Caco-2 (cell line): ENCODE measurements at regions of chr1 and their contacts with region 1.

Region 1: GRCh38 chr1:226547754-226548191 is 791 bp upstream of the STUM start:
- DNase-seq: peak; percentile 84 to 85
- H3K4me3 ChIP-seq: peak overlapping the region; percentile 40; the same call in 1 of the 2 replicates
- H3K4me3 Mint-ChIP-seq: peak overlapping the region; percentile 63
- H3K27ac Mint-ChIP-seq: no peak overlapping the region
- H3K4me1 ChIP-seq: peaks cover 6% of the 10 kb centered on the region
- H3K4me1 Mint-ChIP-seq: peaks cover 11% of the 10 kb centered on the region
- H3K27me3 ChIP-seq: peaks cover 1% of the 10 kb centered on the region; the same call in 1 of the 2 replicates
- H3K27me3 Mint-ChIP-seq: peaks cover 7% of the 10 kb centered on the region
- CTCF ChIP-seq: peak; percentile 59 to 86

Region 2: DNA sequence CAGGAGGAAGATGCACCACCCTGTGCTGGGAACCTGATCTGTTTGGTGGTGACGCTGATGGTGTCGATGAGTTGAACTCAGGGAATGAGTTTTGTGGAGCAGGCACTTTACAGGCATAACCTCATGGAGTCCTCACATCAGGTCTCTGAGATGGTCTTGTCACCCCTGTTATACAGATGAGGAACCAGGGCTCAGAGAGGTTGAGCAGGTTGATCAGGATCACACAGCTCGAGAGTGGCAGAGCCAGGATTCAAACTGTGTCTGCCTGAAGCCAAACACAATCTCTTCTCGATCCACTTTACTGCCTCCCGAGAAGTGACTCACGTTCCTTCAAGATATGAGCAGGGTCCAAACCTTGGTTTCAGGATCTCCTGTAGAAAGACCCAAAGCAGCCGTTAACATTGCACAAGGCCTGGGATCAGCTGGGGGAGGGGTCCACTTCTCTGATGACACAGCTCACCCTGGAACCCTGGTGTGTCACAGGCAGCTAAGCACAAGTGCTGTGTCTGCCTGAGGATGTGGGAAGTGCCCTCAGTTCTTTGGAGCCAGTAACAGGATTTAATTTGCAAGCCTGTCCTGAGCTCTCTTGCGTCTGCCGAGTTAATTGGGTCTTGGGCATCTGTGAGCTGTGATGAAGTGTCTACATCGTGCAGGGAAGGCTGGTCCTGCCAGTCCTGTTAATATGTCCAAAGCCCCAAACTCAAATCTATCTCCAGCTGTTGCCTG is 64.6 kb before region 1 on chr1:
- CTCF ChIA-PET with region 1: interaction called, 4 read pairs
- POLR2A ChIA-PET with region 1: no interaction called
- intact Hi-C with region 1: loop called (anchors 1 kb)
- DNase-seq: no peak
- H3K4me3 ChIP-seq: no peak overlapping the region
- H3K4me3 Mint-ChIP-seq: no peak overlapping the region
- H3K27ac Mint-ChIP-seq: no peak overlapping the region
- H3K4me1 ChIP-seq: peaks cover 31% of the 10 kb centered on the region
- H3K4me1 Mint-ChIP-seq: no peaks in the 10 kb centered on the region
- H3K27me3 ChIP-seq: no peaks in the 10 kb centered on the region
- H3K27me3 Mint-ChIP-seq: no peaks in the 10 kb centered on the region
- CTCF ChIP-seq: no peak

Region 3: DNA sequence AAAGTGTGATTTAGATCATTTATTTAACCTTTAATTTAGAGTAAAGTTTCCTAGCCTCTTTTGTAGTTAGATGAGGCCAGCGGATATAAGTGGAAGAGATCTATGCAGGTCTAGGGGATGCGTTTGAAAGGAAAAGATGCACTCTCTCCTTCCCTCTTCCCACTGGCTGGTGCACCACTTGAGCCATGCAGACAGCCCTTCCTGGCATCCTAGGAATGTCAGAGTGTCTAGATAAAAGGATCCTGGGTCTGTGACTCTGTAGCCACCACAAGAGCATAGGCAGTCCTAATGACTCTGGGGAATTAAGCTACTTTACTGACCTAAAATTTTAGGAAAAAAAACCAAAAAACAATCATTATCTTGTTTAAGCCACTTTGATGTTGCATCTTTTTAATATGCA is 15.2 kb before region 1 on chr1:
- CTCF ChIA-PET with region 1: interaction called, 9 read pairs
- POLR2A ChIA-PET with region 1: no interaction called
- intact Hi-C with region 1: loop called (anchors 2 kb)
- DNase-seq: peak in 1 of 2 experiments; percentile 37
- H3K4me3 ChIP-seq: no peak overlapping the region
- H3K4me3 Mint-ChIP-seq: no peak overlapping the region
- H3K27ac Mint-ChIP-seq: no peak overlapping the region
- H3K4me1 ChIP-seq: peaks cover 24% of the 10 kb centered on the region
- H3K4me1 Mint-ChIP-seq: peaks cover 22% of the 10 kb centered on the region
- H3K27me3 ChIP-seq: no peaks in the 10 kb centered on the region
- H3K27me3 Mint-ChIP-seq: peaks cover 3% of the 10 kb centered on the region
- CTCF ChIP-seq: no peak

Region 4: DNA sequence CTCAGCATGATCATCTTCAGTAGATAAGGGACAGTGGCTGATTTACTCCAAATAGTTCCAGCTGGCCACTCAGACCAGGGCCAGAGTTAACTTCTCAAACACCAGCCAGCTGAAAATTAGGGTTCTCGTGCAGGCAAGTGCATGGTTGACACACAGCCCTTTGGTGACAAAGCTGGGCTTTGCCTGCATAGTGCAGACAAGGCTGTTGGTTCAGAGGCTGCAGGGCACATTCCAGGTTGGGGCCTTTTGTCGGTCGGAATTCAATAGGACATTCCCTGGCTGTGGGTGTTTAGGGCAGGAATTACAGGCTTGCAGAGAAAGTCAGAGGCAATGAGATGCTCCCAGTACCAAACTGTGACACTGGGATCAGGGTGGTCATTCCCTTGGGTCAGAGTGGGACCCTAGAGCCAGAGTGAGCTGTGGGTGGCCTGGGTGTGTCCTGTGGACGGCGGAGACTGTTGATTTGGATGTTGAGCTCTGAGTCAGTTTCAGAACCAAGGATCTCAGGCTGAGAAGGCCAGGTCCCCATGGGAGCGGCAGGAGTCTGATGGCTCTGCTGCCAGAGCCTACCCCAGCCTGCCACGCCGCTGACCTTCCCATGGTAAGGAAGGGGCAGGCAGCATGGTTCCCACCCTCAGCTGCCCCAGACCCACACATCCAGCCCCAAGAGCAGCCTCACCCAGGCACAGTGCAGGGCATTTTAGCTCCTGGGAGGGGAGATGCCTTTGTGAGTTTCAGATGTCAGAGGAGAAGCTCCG is 57.0 kb after region 1 on chr1:
- CTCF ChIA-PET with region 1: interaction called, 8 read pairs
- POLR2A ChIA-PET with region 1: no interaction called
- intact Hi-C with region 1: loop called (anchors 2 kb)
- DNase-seq: peak; percentile 64 to 73
- H3K4me3 ChIP-seq: no peak overlapping the region
- H3K4me3 Mint-ChIP-seq: no peak overlapping the region
- H3K27ac Mint-ChIP-seq: peak overlapping the region; percentile 56
- H3K4me1 ChIP-seq: peaks cover 11% of the 10 kb centered on the region
- H3K4me1 Mint-ChIP-seq: peaks cover 4% of the 10 kb centered on the region
- H3K27me3 ChIP-seq: no peaks in the 10 kb centered on the region
- H3K27me3 Mint-ChIP-seq: no peaks in the 10 kb centered on the region
- CTCF ChIP-seq: no peak

Region 5: GRCh38 chr1:226624526-226624925 is 76.8 kb after region 1 on chr1:
- CTCF ChIA-PET with region 1: no interaction called
- POLR2A ChIA-PET with region 1: no interaction called
- intact Hi-C with region 1: loop called (anchors 1 kb)
- DNase-seq: no peak
- H3K4me3 ChIP-seq: no peak overlapping the region
- H3K4me3 Mint-ChIP-seq: no peak overlapping the region
- H3K27ac Mint-ChIP-seq: no peak overlapping the region
- H3K4me1 ChIP-seq: no peaks in the 10 kb centered on the region
- H3K4me1 Mint-ChIP-seq: peaks cover 12% of the 10 kb centered on the region
- H3K27me3 ChIP-seq: no peaks in the 10 kb centered on the region
- H3K27me3 Mint-ChIP-seq: no peaks in the 10 kb centered on the region
- CTCF ChIP-seq: no peak

Region 6: GRCh38 chr1:226827968-226828513 is 280.3 kb after region 1 on chr1:
- CTCF ChIA-PET with region 1: interaction called, 3 read pairs
- POLR2A ChIA-PET with region 1: no interaction called
- intact Hi-C with region 1: loop called (anchors 10 kb)
- DNase-seq: peak; percentile 90
- H3K4me3 ChIP-seq: no peak overlapping the region
- H3K4me3 Mint-ChIP-seq: no peak overlapping the region
- H3K27ac Mint-ChIP-seq: no peak overlapping the region
- H3K4me1 ChIP-seq: no peaks in the 10 kb centered on the region
- H3K4me1 Mint-ChIP-seq: no peaks in the 10 kb centered on the region
- H3K27me3 ChIP-seq: no peaks in the 10 kb centered on the region
- H3K27me3 Mint-ChIP-seq: no peaks in the 10 kb centered on the region
- CTCF ChIP-seq: peak; percentile 78 to 81

Region 7: DNA sequence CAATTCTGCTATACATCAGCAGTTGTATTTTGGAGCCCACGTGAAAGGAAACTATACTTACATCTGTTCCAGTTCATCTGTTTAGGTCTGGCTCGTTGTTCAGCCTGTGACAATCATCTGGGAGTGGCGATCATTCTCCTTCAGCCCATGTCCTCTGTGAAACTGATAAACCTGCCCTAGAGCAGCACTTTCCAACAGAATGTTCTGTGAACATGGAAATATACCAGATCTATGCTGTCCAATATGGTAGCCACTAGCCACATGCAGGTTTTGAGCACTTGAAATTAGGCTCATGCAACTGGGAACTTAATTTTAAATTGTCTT is 367.9 kb after region 1 on chr1:
- CTCF ChIA-PET with region 1: no interaction called
- POLR2A ChIA-PET with region 1: no interaction called
- intact Hi-C with region 1: no loop called
- DNase-seq: no peak
- H3K4me3 ChIP-seq: no peak overlapping the region
- H3K4me3 Mint-ChIP-seq: no peak overlapping the region
- H3K27ac Mint-ChIP-seq: no peak overlapping the region
- H3K4me1 ChIP-seq: no peaks in the 10 kb centered on the region
- H3K4me1 Mint-ChIP-seq: no peaks in the 10 kb centered on the region
- H3K27me3 ChIP-seq: no peaks in the 10 kb centered on the region
- H3K27me3 Mint-ChIP-seq: no peaks in the 10 kb centered on the region
- CTCF ChIP-seq: no peak